Naive thymus-derived CD4-positive, alpha-beta T cell (primary cell): ENCODE measurements at regions of chr2 and their contacts with region 1.

Region 1: DNA sequence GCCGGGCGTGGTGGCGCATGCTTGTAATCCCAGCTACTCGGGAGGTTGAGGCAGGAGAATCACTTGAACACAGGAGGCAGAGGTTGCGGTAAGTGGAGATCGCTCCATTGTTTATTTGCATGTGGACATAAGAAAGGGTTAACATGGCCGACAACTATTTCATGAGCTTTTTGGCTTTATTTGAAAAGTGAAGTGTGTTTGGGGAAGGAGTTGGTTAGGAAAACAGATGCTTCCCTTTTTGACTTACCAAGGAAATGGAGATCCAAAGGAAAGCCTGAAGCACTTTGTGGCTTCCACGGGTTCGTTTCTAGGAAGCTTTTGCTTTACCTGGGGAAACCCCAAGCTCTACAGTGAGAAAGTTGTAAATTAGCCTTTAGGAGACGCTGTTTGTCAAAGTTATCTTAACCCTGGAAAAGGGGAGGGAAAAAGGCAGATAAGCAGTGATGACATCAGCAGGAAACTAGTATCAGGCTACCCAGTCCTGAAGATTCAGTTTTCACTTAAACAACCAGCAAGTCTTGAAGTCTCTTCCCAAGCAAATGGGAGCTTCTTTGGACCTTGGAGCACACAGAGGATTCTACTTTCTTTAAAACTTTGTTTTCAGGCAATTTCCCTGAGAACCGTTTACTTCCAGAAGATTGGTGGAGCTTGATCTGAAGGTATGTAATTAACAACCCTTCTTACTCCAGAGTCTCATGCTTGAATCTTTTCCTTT is at the start of gene CASP10:
- DNase-seq: peak in 7 of 9 donors; percentile 67 to 83 (median 77)
- ATAC-seq: peak; percentile 90
- H3K4me3 ChIP-seq: peak within 1 kb of the TSS; percentile 68
- H3K4me3 Mint-ChIP-seq: peak within 1 kb of the TSS; percentile 87 to 99 (median 95)
- H3K27ac ChIP-seq: peak within 1 kb of the TSS; percentile 89
- H3K27ac Mint-ChIP-seq: peak within 1 kb of the TSS; percentile 86 to 98 (median 95)
- H3K4me1 ChIP-seq: peaks cover 22 to 24% of the 10 kb centered on the region in 2 donors
- H3K4me1 Mint-ChIP-seq: peaks cover 26 to 46% (median 29%) of the 10 kb centered on the region in 7 donors
- H3K27me3 ChIP-seq: no peaks in the 10 kb centered on the region
- H3K27me3 Mint-ChIP-seq: no peaks in the 10 kb centered on the region
- total RNA-seq, gene CASP10: 29.0 to 49.8 (median 42.9) TPM

Region 2: GRCh38 chr2:200901459-200902072 is 281.2 kb before region 1 on chr2:
- CTCF ChIA-PET with region 1: interaction called, 12 read pairs
- POLR2A ChIA-PET with region 1: no interaction called
- intact Hi-C with region 1: no loop called
- DNase-seq: peak; percentile 18 to 83 (median 76)
- ATAC-seq: peak; percentile 100
- H3K4me3 ChIP-seq: no peak overlapping the region
- H3K4me3 Mint-ChIP-seq: no peak overlapping the region
- H3K27ac ChIP-seq: no peak overlapping the region
- H3K27ac Mint-ChIP-seq: peak overlapping the region; percentile 4 to 86 (median 44)
- H3K4me1 ChIP-seq: no peaks in the 10 kb centered on the region
- H3K4me1 Mint-ChIP-seq: peaks cover 0 to 27% (median 6%) of the 10 kb centered on the region in 7 donors
- H3K27me3 ChIP-seq: no peaks in the 10 kb centered on the region
- H3K27me3 Mint-ChIP-seq: no peaks in the 10 kb centered on the region

Region 3: DNA sequence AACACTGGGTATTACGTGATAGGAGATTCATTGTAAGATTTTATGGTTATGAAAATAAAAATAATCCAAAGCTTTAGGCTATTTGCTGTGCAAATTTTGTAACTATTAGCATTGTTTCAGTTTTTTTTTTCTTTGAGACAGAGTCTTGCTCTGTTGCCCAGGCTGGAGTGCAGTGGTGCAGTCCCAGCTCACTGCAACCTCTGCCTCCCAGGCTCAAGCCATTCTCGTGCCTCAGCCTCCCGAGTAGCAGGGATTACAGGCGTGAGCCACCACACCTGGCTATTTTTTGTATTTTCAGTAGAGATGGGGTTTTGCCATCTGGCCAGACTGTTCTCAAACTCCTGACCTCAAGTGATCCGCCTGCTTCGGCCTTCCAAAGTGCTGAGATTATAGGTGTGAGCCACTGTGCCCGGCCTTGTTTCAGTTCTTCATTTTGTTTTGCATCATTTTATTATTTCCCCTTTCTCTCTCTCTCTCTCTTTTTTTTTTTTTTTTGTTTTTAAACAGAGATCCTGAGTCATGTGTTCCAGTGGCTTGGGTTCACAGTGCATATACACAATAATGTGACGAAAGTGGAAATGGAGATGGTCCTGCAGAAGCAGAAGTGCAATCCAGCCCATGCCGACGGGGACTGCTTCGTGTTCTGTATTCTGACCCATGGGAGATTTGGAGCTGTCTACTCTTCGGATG is 25.9 kb after region 1 on chr2:
- CTCF ChIA-PET with region 1: interaction called, 8 read pairs
- POLR2A ChIA-PET with region 1: interaction called, 5 read pairs
- intact Hi-C with region 1: loop called (anchors 1 kb)
- DNase-seq: no peak
- ATAC-seq: peak; percentile 75
- H3K4me3 ChIP-seq: no peak overlapping the region
- H3K4me3 Mint-ChIP-seq: no peak overlapping the region
- H3K27ac ChIP-seq: no peak overlapping the region
- H3K27ac Mint-ChIP-seq: peak overlapping the region in 7 of 9 donors; percentile 20 to 63 (median 31)
- H3K4me1 ChIP-seq: peaks cover 0 to 29% of the 10 kb centered on the region in 2 donors
- H3K4me1 Mint-ChIP-seq: peaks cover 18 to 62% (median 33%) of the 10 kb centered on the region in 7 donors
- H3K27me3 ChIP-seq: no peaks in the 10 kb centered on the region
- H3K27me3 Mint-ChIP-seq: no peaks in the 10 kb centered on the region

Region 4: DNA sequence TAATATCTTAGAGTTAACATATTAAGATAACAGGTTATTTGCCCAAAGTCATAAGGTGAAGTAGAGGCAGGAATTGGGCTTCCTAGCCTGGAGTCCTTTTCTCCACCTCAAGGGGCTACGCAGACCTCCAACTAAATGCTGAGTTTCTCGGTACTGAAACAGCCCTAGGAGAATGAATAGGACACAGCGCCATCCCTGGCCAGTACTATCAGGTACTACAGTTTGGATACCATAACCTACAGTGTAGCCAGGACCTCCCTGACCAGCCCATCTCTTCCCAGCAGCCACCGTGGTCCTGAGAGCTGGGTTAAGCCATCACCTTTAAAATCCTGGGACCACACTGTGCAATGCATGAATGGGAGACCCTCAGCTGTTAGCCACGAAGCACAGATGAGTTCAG is 93.2 kb after region 1 on chr2:
- CTCF ChIA-PET with region 1: interaction called, 3 read pairs
- POLR2A ChIA-PET with region 1: no interaction called
- intact Hi-C with region 1: loop called in 1 of 2 experiments (anchors 5 kb)
- DNase-seq: no peak
- ATAC-seq: peak; percentile 40
- H3K4me3 ChIP-seq: no peak overlapping the region
- H3K4me3 Mint-ChIP-seq: no peak overlapping the region
- H3K27ac ChIP-seq: no peak overlapping the region
- H3K27ac Mint-ChIP-seq: peak overlapping the region in 8 of 9 donors; percentile 41 to 82 (median 64)
- H3K4me1 ChIP-seq: peaks cover 0 to 22% of the 10 kb centered on the region in 2 donors
- H3K4me1 Mint-ChIP-seq: peaks cover 35 to 73% (median 59%) of the 10 kb centered on the region in 7 donors
- H3K27me3 ChIP-seq: no peaks in the 10 kb centered on the region
- H3K27me3 Mint-ChIP-seq: no peaks in the 10 kb centered on the region

Region 5: GRCh38 chr2:201780674-201781581 is 598.1 kb after region 1 on chr2 and contains the start of gene ALS2:
- CTCF ChIA-PET with region 1: no interaction called
- POLR2A ChIA-PET with region 1: no interaction called
- intact Hi-C with region 1: loop called (anchors 2 to 5 kb)
- DNase-seq: peak; percentile 91 to 97 (median 95)
- ATAC-seq: peak; percentile 96
- H3K4me3 ChIP-seq: peak within 1 kb of the TSS; percentile 96
- H3K4me3 Mint-ChIP-seq: peak within 1 kb of the TSS; percentile 87 to 99 (median 98)
- H3K27ac ChIP-seq: peak within 1 kb of the TSS; percentile 84
- H3K27ac Mint-ChIP-seq: peak within 1 kb of the TSS; percentile 84 to 99 (median 97)
- H3K4me1 ChIP-seq: peaks cover 7 to 10% of the 10 kb centered on the region in 2 donors
- H3K4me1 Mint-ChIP-seq: peaks cover 5 to 36% (median 21%) of the 10 kb centered on the region in 7 donors
- H3K27me3 ChIP-seq: no peaks in the 10 kb centered on the region
- H3K27me3 Mint-ChIP-seq: peaks cover 0 to 22% (median 0%) of the 10 kb centered on the region in 5 donors
- total RNA-seq, gene ALS2: 8.9 to 13.5 (median 10.7) TPM